PC-3 (cell line): ENCODE measurements at regions of chr17 and their contacts with region 1.

Region 1: GRCh38 chr17:9768381-9768934 is 22.9 kb downstream of the DHRS7C start:
- DNase-seq: peak; percentile 56
- ATAC-seq: no peak
- H3K4me3 ChIP-seq: no peak overlapping the region
- H3K27ac ChIP-seq: no peak overlapping the region
- H3K4me1 ChIP-seq: no peaks in the 10 kb centered on the region
- H3K27me3 ChIP-seq: peaks cover 10% of the 10 kb centered on the region; the same call in 1 of the 2 replicates
- CTCF ChIP-seq: peak; percentile 22; the same call in 1 of the 2 replicates

Region 2: DNA sequence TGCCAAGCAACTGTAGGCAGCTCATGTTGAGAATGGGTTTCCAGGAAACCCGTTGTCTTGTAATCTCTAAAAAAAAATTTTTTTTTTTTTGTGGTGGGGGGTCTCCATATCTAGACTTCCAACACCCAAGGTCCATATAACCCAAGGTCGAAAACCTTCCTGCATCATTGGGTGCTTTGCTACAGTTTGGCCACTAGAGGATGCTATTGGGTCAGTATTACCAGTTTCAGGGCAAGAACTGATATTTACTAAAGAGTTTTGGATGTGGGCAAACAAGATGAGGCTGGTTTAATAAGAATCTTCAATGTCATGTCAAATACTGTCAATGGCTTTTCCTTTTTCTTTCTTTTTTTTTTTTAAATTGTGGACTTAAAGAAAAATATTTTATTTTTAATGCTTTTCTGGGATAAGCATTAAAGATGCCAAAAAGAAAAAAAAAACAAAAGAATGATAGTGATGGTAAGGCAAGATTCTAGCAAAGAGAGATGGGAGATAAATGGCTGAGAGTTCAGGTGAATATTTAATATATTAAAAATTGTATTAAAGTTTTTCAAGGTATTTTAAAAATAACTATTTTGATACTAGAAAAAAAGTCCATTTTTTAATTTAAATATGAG is 39.3 kb before region 1 on chr17:
- CTCF ChIA-PET with region 1: interaction called, 5 read pairs
- POLR2A ChIA-PET with region 1: no interaction called
- intact Hi-C with region 1: loop called (anchors 1 kb)
- DNase-seq: peak; percentile 65
- ATAC-seq: peak; percentile 35; the same call in 1 of the 2 replicates
- H3K4me3 ChIP-seq: no peak overlapping the region
- H3K27ac ChIP-seq: no peak overlapping the region
- H3K4me1 ChIP-seq: peaks cover 6% of the 10 kb centered on the region
- H3K27me3 ChIP-seq: no peaks in the 10 kb centered on the region
- CTCF ChIP-seq: peak; percentile 85

Region 3: GRCh38 chr17:9750524-9750923 is 17.9 kb before region 1 on chr17:
- CTCF ChIA-PET with region 1: no interaction called
- POLR2A ChIA-PET with region 1: no interaction called
- intact Hi-C with region 1: no loop called
- DNase-seq: no peak
- ATAC-seq: no peak
- H3K4me3 ChIP-seq: no peak overlapping the region
- H3K27ac ChIP-seq: no peak overlapping the region
- H3K4me1 ChIP-seq: no peaks in the 10 kb centered on the region
- H3K27me3 ChIP-seq: peaks cover 19% of the 10 kb centered on the region
- CTCF ChIP-seq: no peak